CD8-positive, alpha-beta memory T cell (primary cell): ENCODE measurements at regions of chr1 and their contacts with region 1.

Region 1: GRCh38 chr1:244302889-244303613 is 148.7 kb downstream of the ADSS2 start:
- DNase-seq: no peak
- H3K4me3 ChIP-seq: no peak overlapping the region
- H3K4me3 Mint-ChIP-seq: peak overlapping the region in 1 of 7 donors; percentile 34
- H3K27ac ChIP-seq: peak overlapping the region; percentile 65
- H3K27ac Mint-ChIP-seq: peak overlapping the region in 1 of 8 donors; percentile 78
- H3K4me1 ChIP-seq: no peaks in the 10 kb centered on the region
- H3K4me1 Mint-ChIP-seq: peaks cover 8 to 11% (median 8%) of the 10 kb centered on the region in 3 donors
- H3K27me3 ChIP-seq: no peaks in the 10 kb centered on the region
- H3K27me3 Mint-ChIP-seq: no peaks in the 10 kb centered on the region

Region 2: DNA sequence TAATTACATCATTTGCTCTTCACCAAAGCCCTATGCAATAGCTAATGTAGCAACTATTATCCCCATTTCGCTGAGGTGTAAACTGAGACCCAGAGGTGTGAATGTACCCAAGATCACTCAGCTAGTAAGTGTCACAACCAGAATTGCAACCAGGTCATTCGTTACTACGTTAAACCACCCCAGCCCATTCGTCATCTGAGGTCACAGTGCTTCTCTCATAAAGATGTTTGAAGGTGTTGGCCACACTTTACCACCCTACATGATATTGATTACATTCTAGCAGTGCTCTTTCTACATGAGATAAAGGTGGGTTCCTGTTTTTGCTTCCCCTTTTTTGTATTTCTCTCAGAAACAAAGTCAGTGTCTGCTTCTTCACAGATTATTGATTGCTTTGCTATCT is 56.7 kb before region 1 on chr1:
- CTCF ChIA-PET with region 1: no interaction called
- POLR2A ChIA-PET with region 1: no interaction called
- DNase-seq: no peak
- H3K4me3 ChIP-seq: no peak overlapping the region
- H3K4me3 Mint-ChIP-seq: no peak overlapping the region
- H3K27ac ChIP-seq: no peak overlapping the region
- H3K27ac Mint-ChIP-seq: no peak overlapping the region
- H3K4me1 ChIP-seq: peaks cover 6% of the 10 kb centered on the region
- H3K4me1 Mint-ChIP-seq: peaks cover 4 to 7% (median 5%) of the 10 kb centered on the region in 3 donors
- H3K27me3 ChIP-seq: no peaks in the 10 kb centered on the region
- H3K27me3 Mint-ChIP-seq: peaks cover 0 to 11% of the 10 kb centered on the region in 2 donors

Region 3: DNA sequence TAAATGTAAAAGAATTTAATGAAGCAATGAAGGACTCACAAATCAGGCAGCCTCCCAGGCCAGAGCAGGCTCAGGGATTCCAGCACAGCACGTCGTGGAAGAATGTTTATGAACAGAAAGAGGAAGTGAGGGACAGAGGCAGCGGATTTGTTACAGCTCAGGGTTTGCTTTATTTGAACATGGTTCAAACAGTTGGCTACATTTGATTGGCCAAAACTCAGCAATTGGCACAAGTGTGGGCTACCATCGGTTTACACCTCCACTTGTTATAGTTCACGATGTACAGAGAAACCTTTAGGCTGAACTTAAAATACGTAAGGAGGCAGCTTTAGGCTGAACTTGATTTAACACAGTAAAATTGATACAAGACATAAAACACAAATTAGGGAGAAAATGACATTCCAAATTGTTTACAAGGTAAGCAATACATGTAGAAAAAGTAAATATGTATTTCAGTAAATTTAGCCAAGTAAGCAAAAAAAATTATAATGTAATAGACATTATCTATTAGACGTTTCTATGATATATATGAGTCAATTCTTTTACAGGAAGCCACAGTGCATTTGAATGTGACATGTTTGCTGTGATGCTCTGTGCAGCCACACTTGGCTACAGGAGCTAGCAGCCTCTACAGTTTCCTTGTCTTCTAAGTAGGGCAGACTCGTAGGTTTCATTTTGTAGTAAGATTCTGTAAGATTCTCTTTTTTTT is 22.2 kb after region 1 on chr1:
- CTCF ChIA-PET with region 1: interaction called, 16 read pairs
- POLR2A ChIA-PET with region 1: no interaction called
- DNase-seq: peak in 3 of 5 donors; percentile 16 to 58 (median 51)
- H3K4me3 ChIP-seq: no peak overlapping the region
- H3K4me3 Mint-ChIP-seq: peak overlapping the region; percentile 18 to 98 (median 90)
- H3K27ac ChIP-seq: peak overlapping the region; percentile 58
- H3K27ac Mint-ChIP-seq: peak overlapping the region; percentile 76 to 99 (median 94)
- H3K4me1 ChIP-seq: peaks cover 35% of the 10 kb centered on the region
- H3K4me1 Mint-ChIP-seq: peaks cover 49 to 66% (median 60%) of the 10 kb centered on the region in 3 donors
- H3K27me3 ChIP-seq: no peaks in the 10 kb centered on the region
- H3K27me3 Mint-ChIP-seq: no peaks in the 10 kb centered on the region

Region 4: DNA sequence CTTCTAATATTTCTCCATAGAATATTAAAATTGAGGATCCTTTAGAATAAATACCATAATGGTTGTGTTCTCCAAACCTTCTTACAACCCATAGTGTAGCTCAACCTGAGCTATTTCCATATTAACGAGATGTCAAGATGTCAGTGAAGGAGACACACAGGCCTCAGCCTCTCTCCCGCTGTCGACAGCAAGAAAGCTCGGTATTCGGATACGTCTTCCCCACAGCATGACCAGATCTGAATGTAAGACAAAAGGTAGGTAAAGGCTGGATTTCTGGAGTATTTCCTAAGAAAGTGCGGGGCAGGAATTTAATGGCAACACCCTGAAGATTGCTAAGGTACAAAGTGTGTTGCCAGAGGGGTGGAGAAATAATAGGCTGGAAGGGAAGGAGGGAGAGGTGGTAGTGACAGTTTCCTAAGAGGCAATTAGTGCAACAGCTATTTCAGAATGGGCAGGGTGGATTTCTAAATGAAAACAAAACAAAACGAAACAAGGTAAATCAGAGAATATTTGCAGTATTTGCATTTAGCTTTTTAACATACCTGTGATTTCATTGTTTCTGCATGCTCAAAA is 147.0 kb after region 1 on chr1:
- CTCF ChIA-PET with region 1: interaction called, 10 read pairs
- POLR2A ChIA-PET with region 1: no interaction called
- DNase-seq: no peak
- H3K4me3 ChIP-seq: peak overlapping the region; percentile 52
- H3K4me3 Mint-ChIP-seq: peak overlapping the region; percentile 89 to 99 (median 96)
- H3K27ac ChIP-seq: peak overlapping the region; percentile 97
- H3K27ac Mint-ChIP-seq: peak overlapping the region; percentile 95 to 99 (median 98)
- H3K4me1 ChIP-seq: peaks cover 51% of the 10 kb centered on the region
- H3K4me1 Mint-ChIP-seq: peaks cover 58 to 73% (median 65%) of the 10 kb centered on the region in 3 donors
- H3K27me3 ChIP-seq: no peaks in the 10 kb centered on the region
- H3K27me3 Mint-ChIP-seq: peaks cover 0 to 3% of the 10 kb centered on the region in 2 donors